ENCODE measurements at regions of chr3 and their contacts with region 1.

Region 1: DNA sequence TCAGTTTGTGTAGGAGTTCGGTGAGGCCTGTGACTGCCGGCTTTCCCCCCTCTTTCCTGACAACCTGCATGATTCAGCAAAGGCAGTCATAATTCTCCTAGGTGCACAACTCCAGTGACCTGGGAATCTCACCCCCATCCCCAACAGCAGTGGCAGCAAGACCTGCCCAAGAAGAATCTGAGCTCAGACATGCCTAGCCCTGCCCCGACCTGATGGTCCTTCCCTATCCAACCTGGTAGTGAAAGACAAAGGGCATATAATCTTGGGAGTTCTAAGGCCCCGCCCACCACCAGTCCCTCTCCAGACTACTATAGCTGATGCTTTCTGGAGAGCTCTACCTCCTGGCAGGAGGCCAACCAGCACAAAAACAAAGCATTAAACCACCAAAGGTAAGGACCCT is 44.2 kb upstream of the ZBED2 start:
- DNase-seq: no peak
- ATAC-seq: no peak
- H3K4me3 ChIP-seq: no peak overlapping the region
- H3K27ac ChIP-seq: no peak overlapping the region
- H3K4me1 ChIP-seq: no peaks in the 10 kb centered on the region
- H3K27me3 ChIP-seq: no peaks in the 10 kb centered on the region
- CTCF ChIP-seq: no peak
- POLR2A ChIP-seq: no peak
- RAD21 ChIP-seq: no peak

Region 2: DNA sequence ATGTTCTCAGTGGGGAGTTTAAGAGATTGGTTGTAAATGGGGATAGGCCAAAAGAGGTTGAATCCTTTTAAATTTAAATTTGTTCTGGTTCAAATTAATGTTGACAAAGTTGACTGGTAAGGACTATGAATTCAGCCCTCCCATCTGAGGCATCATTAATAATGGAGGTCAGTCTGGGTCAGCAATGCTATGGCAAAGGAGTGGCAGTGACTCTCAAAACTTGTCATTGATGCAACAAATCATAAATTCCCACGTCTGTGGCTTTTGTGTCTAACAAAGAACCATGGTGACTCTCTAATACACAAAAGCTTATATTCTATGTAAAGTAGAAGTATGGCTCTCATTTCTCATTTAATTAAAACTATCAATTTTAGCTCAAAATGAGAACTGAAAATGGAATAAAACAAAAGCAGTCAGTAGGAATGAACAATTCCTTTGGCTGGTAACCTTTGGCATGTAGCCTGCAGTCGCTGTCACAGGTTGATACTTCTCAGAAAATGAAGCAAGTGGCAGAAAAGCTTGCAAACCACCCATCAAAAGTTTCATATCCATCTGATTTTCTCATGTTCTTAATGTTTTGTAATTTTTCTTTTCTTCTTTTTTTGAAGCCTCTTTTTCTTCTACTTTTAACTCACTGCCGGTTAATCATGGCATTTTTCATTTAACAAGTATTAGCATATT is 31.9 kb before region 1 on chr3:
- CTCF ChIA-PET with region 1: no interaction called
- POLR2A ChIA-PET with region 1: no interaction called
- dilution Hi-C with region 1: no loop called
- in situ Hi-C with region 1: no loop called
- intact Hi-C with region 1: loop called (anchors 2 kb)
- DNase-seq: no peak
- ATAC-seq: no peak
- H3K4me3 ChIP-seq: no peak overlapping the region
- H3K27ac ChIP-seq: no peak overlapping the region
- H3K4me1 ChIP-seq: peaks cover 6% of the 10 kb centered on the region
- H3K27me3 ChIP-seq: no peaks in the 10 kb centered on the region
- CTCF ChIP-seq: no peak
- POLR2A ChIP-seq: no peak
- RAD21 ChIP-seq: no peak

Measured in IMR-90 (cell line).